PC-9 (cell line): ENCODE measurements at regions of chr14 and their contacts with region 1.

Region 1: GRCh38 chr14:105773995-105774394 is 247.6 kb downstream of the TMEM121 start:
- DNase-seq: peak in 1 of 2 experiments; percentile 9
- H3K4me3 ChIP-seq: no peak overlapping the region
- H3K27ac ChIP-seq: no peak overlapping the region
- H3K4me1 ChIP-seq: no peaks in the 10 kb centered on the region
- H3K27me3 ChIP-seq: peaks cover 35% of the 10 kb centered on the region
- CTCF ChIP-seq: peak; percentile 43; the same call in 1 of the 2 replicates

Region 2: DNA sequence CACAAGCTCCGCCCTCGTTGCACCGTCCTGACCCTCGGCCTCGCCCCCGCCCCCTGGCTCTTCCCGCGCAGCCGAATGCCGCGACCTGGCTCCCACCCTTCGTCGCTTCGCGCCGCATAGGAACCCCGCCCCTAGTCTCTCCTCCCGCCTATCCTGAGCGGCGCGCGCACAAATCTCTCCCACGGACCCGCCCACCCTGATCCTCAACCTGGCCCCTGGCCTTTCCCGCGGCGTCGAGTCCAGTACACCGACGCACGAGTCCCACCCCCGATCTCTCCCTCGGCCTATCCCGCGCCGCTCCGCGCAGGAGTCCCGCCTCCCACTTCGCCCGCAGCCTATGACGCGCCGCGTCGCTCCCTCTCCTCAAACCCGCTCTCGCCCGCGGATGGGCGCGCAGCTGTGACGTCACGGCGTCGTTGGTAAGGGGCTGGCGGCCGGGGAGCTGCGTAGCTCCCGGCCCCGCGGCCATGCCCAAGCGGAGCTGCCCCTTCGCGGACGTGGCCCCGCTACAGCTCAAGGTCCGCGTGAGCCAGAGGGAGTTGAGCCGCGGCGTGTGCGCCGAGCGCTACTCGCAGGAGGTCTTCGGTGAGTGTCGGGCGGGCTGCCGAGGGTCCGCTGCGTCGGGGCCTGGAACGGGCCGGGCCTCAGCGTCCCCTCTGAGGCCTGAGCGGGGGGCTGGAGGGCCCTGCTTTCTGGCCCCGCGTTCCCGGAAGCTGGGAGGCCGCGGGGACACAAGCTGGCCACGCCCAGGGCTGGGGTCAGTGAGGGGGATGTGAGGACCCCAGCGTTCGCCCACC is 1021.1 kb before region 1 on chr14 and contains the start of gene SIVA1:
- CTCF ChIA-PET with region 1: no interaction called
- POLR2A ChIA-PET with region 1: no interaction called
- intact Hi-C with region 1: no loop called
- DNase-seq: peak; percentile 95 to 97
- H3K4me3 ChIP-seq: peak within 1 kb of the TSS; percentile 65
- H3K27ac ChIP-seq: 0 out of 2 replicates have a peak within 1 kb of the TSS, but pooled peaks have one; percentile 7
- H3K4me1 ChIP-seq: peaks cover 28% of the 10 kb centered on the region
- H3K27me3 ChIP-seq: no peaks in the 10 kb centered on the region
- CTCF ChIP-seq: no peak
- total RNA-seq, gene SIVA1: 85.8 and 116 TPM in 2 replicates

Region 3: GRCh38 chr14:105793836-105794235 is 19.8 kb after region 1 on chr14:
- CTCF ChIA-PET with region 1: no interaction called
- POLR2A ChIA-PET with region 1: interaction called, 16 read pairs
- intact Hi-C with region 1: no loop called
- DNase-seq: no peak
- H3K4me3 ChIP-seq: no peak overlapping the region
- H3K27ac ChIP-seq: no peak overlapping the region
- H3K4me1 ChIP-seq: no peaks in the 10 kb centered on the region
- H3K27me3 ChIP-seq: no peaks in the 10 kb centered on the region
- CTCF ChIP-seq: no peak

Region 4: DNA sequence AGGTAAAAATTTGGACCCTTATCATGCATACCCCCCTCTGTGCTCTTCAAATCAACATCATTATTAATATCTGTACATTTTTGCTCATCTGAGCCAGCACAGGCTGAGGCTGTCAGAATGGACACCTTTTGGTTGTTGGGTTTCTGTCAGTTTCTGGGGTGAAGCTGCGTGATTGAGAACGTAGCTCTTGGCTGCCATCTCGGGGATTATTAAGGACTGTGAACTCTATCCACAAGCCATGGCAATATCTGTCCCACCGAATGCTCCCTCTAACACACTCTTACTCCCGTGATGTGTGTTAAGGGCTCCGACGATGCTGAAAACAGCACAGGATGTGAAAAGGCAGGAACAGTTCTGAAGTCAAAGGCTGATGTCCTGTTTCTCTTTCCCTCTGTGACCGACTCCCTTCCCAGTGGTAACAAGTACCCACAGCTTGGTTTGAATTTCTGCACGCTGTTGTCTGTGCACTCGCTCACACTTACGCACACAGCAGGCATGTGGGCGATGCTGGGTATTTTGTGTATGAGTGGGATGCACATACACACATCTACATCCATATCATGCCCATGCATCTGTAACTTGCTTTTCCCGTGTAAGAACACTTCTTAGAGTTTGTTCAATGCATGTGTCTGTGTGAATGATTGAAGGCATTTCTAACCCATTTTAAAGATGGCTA is 158.0 kb after region 1 on chr14:
- CTCF ChIA-PET with region 1: no interaction called
- POLR2A ChIA-PET with region 1: no interaction called
- intact Hi-C with region 1: no loop called
- DNase-seq: no peak
- H3K4me3 ChIP-seq: no peak overlapping the region
- H3K27ac ChIP-seq: no peak overlapping the region
- H3K4me1 ChIP-seq: no peaks in the 10 kb centered on the region
- H3K27me3 ChIP-seq: peaks cover 59% of the 10 kb centered on the region
- CTCF ChIP-seq: 0 out of 2 replicates have a peak, but pooled peaks have one; percentile 29